ENCODE measurements at regions of chr1 and their contacts with region 1.

Region 1: DNA sequence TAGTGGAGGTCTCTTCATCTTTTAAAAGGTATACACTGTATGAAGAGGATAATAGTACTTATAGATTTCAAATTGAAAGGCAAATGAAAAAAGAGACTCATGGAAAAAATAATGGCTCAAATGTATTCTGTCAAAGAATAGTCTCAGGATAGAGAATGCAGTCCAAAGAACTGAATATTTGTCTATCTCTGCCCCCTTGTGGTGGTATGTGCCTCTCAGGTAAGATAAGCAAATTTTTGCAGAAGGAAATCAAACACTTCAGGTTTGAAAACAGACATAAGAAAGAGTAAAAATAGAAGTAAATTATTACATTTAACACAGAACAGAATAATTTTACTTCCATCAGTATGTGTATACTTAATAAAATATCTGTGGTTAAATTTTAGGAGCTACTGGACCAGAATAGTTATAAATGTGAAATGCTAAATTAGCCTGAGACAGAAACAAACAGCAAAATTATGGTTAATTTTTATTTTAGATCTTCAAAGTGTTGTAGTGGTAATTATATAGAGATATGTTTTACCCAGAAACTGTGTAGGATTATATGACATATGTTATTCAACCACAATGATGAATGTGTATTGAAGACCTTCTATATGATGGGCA is 164.4 kb upstream of the PALMD start:
- DNase-seq: peak in 3 of 5 donors; percentile 27 to 56 (median 38)
- ATAC-seq: peak in 2 of 4 donors; percentile 66 to 81
- H3K4me3 ChIP-seq: no peak overlapping the region
- H3K27ac ChIP-seq: no peak overlapping the region
- H3K4me1 ChIP-seq: peaks cover 0 to 3% (median 0%) of the 10 kb centered on the region in 12 donors
- H3K27me3 ChIP-seq: no peaks in the 10 kb centered on the region
- CTCF ChIP-seq: peak; percentile 63 to 88 (median 80)
- POLR2A ChIP-seq: no peak

Region 2: DNA sequence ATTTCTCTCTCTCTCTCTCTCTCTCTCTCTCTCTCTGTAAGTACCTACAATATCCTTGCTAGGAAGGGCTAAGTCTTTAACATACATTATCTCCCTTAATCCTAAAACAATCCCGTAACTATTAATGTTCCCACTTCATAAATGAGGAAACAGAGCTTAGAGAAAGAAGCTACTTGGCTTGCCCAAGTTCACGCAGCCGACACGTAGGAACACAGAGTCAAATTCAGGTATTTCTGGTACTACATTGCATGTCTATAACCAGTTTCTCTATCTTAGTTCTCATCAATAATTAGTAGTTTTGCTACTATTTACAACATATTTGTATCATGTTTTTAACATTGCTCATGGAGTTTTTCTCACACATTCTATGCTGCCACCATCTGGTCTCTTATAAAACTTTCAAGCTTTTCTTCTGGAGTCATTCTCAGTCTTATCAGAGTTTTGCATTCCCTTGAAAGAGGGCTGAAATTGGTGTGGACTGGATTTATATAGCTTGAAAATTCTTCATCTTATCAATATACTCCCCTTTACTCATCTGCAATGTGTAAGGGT is 45.5 kb after region 1 on chr1:
- intact Hi-C with region 1: loop called in 2 of 10 experiments (anchors 2 to 5 kb)
- DNase-seq: no peak
- ATAC-seq: peak in 1 of 4 donors; percentile 42
- H3K4me3 ChIP-seq: no peak overlapping the region
- H3K27ac ChIP-seq: no peak overlapping the region
- H3K4me1 ChIP-seq: peaks cover 0 to 23% (median 3%) of the 10 kb centered on the region in 12 donors
- H3K27me3 ChIP-seq: no peaks in the 10 kb centered on the region
- CTCF ChIP-seq: peak in 11 of 12 donors; percentile 6 to 63 (median 42)
- POLR2A ChIP-seq: no peak

Measured in heart left ventricle (tissue), 16 donors.